ENCODE measurements at regions of chr1 and their contacts with region 1.

Region 1: GRCh38 chr1:87495147-87495546 is 166.5 kb downstream of the LMO4 start:
- DNase-seq: no peak
- ATAC-seq: no peak
- H3K4me3 ChIP-seq: no peak overlapping the region
- H3K27ac ChIP-seq: no peak overlapping the region
- H3K4me1 ChIP-seq: no peaks in the 10 kb centered on the region
- H3K27me3 ChIP-seq: no peaks in the 10 kb centered on the region
- CTCF ChIP-seq: no peak

Region 2: GRCh38 chr1:88910401-88910800 is 1415.3 kb after region 1 on chr1:
- CTCF ChIA-PET with region 1: no interaction called
- POLR2A ChIA-PET with region 1: interaction called, 13 read pairs
- in situ Hi-C with region 1: no loop called
- intact Hi-C with region 1: no loop called
- DNase-seq: no peak
- ATAC-seq: no peak
- H3K4me3 ChIP-seq: no peak overlapping the region
- H3K27ac ChIP-seq: no peak overlapping the region
- H3K4me1 ChIP-seq: no peaks in the 10 kb centered on the region
- H3K27me3 ChIP-seq: no peaks in the 10 kb centered on the region
- CTCF ChIP-seq: no peak